IMR-90 (cell line): ENCODE measurements at regions of chr10 and their contacts with region 1.

Region 1: GRCh38 chr10:109450702-109451101 is 472.6 kb downstream of the XPNPEP1 start:
- DNase-seq: no peak
- ATAC-seq: no peak
- H3K4me3 ChIP-seq: no peak overlapping the region
- H3K27ac ChIP-seq: no peak overlapping the region
- H3K4me1 ChIP-seq: no peaks in the 10 kb centered on the region
- H3K27me3 ChIP-seq: peaks cover 4% of the 10 kb centered on the region
- CTCF ChIP-seq: no peak
- POLR2A ChIP-seq: no peak
- RAD21 ChIP-seq: no peak

Region 2: DNA sequence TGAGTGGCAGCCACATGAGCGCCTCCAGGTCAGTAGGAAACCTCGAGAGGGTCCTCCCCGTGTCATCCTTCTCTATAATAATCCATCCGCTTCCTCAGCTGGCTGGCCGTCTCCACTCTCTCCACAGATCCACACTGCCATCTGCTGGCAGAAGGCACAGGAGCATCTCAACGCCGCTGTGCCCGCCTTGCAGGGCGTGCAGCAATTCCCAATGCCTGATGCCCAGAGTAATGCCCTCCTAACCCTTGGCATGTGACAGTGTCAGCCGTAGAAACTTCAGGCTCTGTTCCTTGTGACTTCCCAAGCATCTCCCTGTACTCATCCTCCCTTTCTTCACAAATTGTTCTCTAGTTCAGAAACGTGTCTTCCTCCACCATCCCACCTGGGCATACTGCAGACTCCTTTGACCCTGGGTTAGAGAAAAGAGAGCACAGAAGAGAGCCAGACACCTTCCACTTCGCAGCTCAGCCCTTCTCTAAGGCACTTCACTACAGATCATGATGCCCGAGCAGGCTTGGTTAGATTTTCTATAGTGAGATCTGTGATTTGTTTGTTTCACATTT is 401.9 kb after region 1 on chr10:
- CTCF ChIA-PET with region 1: no interaction called
- POLR2A ChIA-PET with region 1: no interaction called
- dilution Hi-C with region 1: no loop called
- in situ Hi-C with region 1: no loop called
- intact Hi-C with region 1: loop called (anchors 10 kb)
- DNase-seq: peak; percentile 62
- ATAC-seq: peak; percentile 98
- H3K4me3 ChIP-seq: no peak overlapping the region
- H3K27ac ChIP-seq: no peak overlapping the region
- H3K4me1 ChIP-seq: no peaks in the 10 kb centered on the region
- H3K27me3 ChIP-seq: peaks cover 3% of the 10 kb centered on the region; the same call in 1 of the 2 replicates
- CTCF ChIP-seq: peak; percentile 82
- POLR2A ChIP-seq: no peak
- RAD21 ChIP-seq: peak; percentile 85